ENCODE measurements at regions of chr5 and their contacts with region 1.

Region 1: DNA sequence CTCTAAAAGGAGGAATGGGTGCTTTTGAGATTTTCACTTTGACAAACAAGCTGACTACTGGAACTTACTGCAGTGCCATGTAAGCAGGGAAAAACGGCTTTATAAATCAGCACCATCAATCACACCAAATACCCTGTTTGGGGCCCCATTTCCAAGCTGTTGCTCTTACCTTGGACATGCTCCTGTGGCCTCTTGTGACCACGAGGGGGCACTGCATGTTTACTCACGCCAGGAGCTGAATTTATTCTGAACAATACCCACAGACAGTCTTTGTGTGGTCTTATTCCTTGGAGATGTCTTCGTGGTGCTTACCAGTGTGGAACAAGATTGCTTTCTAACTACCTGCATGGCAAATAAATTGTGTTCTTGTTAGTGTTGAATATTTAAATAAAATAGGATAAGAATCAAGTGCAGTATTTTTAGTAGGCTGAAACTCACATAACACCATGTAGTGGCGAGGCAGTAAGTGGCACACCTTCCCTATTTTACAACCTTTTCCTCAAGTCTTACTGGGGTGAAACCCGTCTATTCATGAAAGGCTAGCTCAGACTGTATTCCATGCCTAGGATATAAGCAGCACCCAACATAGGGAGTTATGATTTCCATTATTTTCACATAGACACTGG is 155.5 kb upstream of the NMUR2 start:
- DNase-seq: peak; percentile 59 to 61
- ATAC-seq: peak in 3 of 8 donors; percentile 55 to 72 (median 67)
- H3K4me3 ChIP-seq: no peak overlapping the region
- H3K27ac ChIP-seq: no peak overlapping the region
- H3K4me1 ChIP-seq: no peaks in the 10 kb centered on the region
- H3K27me3 ChIP-seq: no peaks in the 10 kb centered on the region
- CTCF ChIP-seq: peak; percentile 69 to 93 (median 83)

Region 2: GRCh38 chr5:152505442-152506042 is 55.1 kb before region 1 on chr5:
- intact Hi-C with region 1: no loop called
- DNase-seq: peak in 1 of 2 donors; percentile 41
- ATAC-seq: peak; percentile 58 to 86 (median 71)
- H3K4me3 ChIP-seq: no peak overlapping the region
- H3K27ac ChIP-seq: no peak overlapping the region
- H3K4me1 ChIP-seq: no peaks in the 10 kb centered on the region
- H3K27me3 ChIP-seq: peaks cover 0 to 7% (median 0%) of the 10 kb centered on the region in 7 donors
- CTCF ChIP-seq: peak in 8 of 9 donors; percentile 44 to 72 (median 64)

Region 3: GRCh38 chr5:152683205-152683604 is 122.6 kb after region 1 on chr5:
- intact Hi-C with region 1: no loop called
- DNase-seq: no peak
- ATAC-seq: peak in 1 of 8 donors; percentile 56
- H3K4me3 ChIP-seq: no peak overlapping the region
- H3K27ac ChIP-seq: no peak overlapping the region
- H3K4me1 ChIP-seq: no peaks in the 10 kb centered on the region
- H3K27me3 ChIP-seq: no peaks in the 10 kb centered on the region
- CTCF ChIP-seq: no peak

Region 4: DNA sequence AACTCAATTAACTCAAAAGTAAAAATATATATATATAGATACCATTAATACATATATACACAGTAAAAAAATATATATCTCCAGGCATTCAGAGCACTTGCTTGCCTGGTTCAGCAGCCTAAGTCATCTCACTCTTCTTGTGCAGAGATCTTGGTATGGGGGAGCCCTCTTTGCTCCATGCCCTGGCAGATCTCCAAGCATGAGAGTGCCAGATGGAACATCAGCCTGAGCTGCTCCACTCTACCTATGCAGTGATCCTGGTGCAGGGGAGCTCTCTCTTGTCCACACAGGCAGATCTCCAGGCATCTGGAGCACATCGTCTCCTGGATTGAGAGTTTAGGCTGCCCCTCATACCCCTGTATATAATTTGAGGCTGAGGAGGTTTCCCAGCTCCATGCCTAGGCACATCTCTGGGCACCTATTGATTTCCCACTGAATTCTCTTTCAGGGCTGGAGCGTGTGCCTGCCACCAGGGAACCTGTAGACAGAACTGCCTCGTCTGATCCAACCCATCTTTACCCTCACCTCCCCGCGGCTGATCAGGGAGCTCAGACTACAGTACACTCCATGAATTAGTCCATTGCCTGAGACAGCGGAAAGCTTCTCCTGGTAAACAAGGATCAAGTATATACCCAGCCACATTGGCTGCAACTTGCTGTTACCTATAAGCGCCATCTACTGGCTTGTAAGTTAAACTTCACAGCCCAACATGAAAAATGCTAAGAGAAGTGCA is 587.4 kb after region 1 on chr5:
- intact Hi-C with region 1: loop called (anchors 1 to 10 kb)
- DNase-seq: no peak
- ATAC-seq: peak in 6 of 8 donors; percentile 38 to 82 (median 60)
- H3K4me3 ChIP-seq: no peak overlapping the region
- H3K27ac ChIP-seq: no peak overlapping the region
- H3K4me1 ChIP-seq: no peaks in the 10 kb centered on the region
- H3K27me3 ChIP-seq: peaks cover 0 to 5% (median 0%) of the 10 kb centered on the region in 7 donors
- CTCF ChIP-seq: peak; percentile 32 to 75 (median 65)

Region 5: DNA sequence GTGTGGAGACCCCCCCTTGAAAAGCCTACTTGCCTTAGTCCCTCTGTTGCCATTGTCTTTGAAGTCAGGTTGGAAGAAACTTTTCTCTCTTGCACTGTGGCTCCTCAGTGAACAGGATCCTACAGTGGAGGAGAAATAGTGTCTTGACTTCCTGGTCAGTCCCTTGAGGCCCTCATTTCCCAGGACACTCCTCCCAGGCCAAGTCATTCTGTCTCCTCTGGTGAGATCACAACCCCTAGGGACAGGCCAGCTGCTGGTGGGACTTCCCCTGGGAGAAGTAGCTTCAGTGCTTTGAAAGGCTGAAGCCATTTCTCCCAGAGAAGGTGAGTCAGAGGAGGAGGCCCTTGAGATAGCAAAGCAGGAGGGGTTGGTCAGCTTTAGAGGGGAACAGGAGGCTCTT is 919.8 kb after region 1 on chr5:
- intact Hi-C with region 1: loop called in 1 of 10 experiments (anchors 10 kb)
- DNase-seq: no peak
- ATAC-seq: peak in 1 of 8 donors; percentile 20
- H3K4me3 ChIP-seq: no peak overlapping the region
- H3K27ac ChIP-seq: no peak overlapping the region
- H3K4me1 ChIP-seq: peaks cover 0 to 3% (median 0%) of the 10 kb centered on the region in 9 donors
- H3K27me3 ChIP-seq: peaks cover 0 to 9% (median 0%) of the 10 kb centered on the region in 7 donors
- CTCF ChIP-seq: no peak

Region 6: DNA sequence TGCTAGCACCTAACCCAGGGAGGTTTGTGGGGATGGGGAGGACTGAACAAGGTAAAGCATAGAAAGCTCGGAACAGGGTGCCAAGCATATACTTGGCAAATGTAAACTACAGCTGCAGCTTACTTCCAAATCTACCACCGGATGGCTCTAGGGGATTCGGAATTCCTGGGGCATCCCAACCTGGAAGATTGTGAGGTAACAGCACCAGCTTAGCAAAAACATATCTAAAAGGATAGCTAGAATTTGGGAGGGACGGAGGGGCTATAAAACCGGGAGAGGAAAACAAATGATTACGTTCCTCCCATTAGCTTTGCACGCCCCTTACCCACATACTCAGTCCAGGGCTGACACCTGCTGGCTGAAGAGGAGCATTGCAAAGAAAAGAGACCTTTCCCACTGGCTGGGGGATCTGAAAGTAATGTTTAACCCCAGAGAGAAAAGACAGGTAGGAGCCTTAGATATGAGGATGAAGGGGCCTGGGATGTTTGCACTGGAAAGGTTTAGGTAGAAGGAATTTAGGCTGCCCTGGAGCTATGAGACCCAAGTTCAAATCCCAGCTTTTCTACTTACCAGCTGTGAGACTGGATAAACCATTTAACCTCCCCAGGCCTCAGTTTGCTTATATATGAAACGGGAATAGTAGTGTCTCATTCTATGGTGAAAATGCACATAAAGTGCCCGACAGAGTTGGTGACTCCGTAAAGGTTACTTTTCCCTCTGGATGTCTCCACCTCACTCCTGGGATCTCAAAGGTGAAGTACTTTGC is 1404.4 kb after region 1 on chr5:
- intact Hi-C with region 1: loop called in 3 of 10 experiments (anchors 10 kb)
- DNase-seq: peak; percentile 20 to 35
- ATAC-seq: peak; percentile 55 to 86 (median 78)
- H3K4me3 ChIP-seq: peak overlapping the region in 2 of 10 donors; percentile 15 to 19
- H3K27ac ChIP-seq: no peak overlapping the region
- H3K4me1 ChIP-seq: no peaks in the 10 kb centered on the region
- H3K27me3 ChIP-seq: peaks cover 0 to 11% (median 0%) of the 10 kb centered on the region in 7 donors
- CTCF ChIP-seq: peak; percentile 67 to 95 (median 86)

Measured in heart right ventricle (tissue), 16 donors.